Heart right ventricle (tissue), 16 donors: ENCODE measurements at regions of chr15 and their contacts with region 1.

Region 1: DNA sequence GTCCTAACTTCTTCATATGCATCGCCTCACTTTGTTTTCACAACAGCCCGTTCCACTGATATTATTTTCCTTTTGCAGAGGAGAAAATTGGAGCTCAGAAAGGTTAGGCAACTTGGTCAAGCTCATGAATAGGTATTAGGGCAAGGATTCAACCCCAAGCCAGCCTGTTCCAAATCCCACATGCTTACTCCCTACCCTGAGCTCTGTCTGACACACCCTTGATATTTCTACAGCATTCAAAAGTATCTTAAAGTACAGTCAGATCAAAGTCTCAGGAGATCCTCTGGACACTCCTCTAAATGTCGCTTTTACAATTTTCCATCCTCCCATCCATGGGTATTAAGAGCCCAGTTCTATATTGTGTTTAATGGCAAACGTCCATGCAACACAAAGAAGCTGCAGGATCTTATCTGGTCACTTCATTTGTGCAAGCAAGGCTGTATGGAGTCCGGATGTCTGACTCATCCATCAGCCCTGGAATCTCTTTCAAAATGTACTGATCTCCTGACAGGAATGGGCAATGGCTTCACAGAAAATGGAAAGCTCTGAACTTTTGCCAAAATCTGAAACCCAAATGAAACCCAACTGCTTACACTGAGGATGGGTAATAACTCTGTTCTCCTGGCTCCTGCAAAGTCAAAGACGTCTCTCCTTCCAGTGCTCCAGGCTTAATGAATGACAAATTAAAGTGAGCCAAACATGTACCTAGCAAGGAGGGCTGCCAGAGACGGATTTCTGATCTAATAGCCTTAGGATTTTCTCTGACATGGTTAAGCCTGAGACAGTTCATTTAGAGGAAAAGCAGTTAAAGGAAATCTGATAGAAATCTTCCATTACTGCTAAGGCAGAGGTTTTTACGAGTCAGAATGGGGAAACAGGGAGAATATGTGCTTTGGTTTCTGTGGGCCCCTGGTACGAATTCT is 230.9 kb upstream of the RORA start:
- DNase-seq: no peak
- ATAC-seq: peak in 1 of 8 donors; percentile 41
- H3K4me3 ChIP-seq: no peak overlapping the region
- H3K27ac ChIP-seq: no peak overlapping the region
- H3K4me1 ChIP-seq: no peaks in the 10 kb centered on the region
- H3K27me3 ChIP-seq: peaks cover 0 to 33% (median 8%) of the 10 kb centered on the region in 7 donors
- CTCF ChIP-seq: no peak

Region 2: DNA sequence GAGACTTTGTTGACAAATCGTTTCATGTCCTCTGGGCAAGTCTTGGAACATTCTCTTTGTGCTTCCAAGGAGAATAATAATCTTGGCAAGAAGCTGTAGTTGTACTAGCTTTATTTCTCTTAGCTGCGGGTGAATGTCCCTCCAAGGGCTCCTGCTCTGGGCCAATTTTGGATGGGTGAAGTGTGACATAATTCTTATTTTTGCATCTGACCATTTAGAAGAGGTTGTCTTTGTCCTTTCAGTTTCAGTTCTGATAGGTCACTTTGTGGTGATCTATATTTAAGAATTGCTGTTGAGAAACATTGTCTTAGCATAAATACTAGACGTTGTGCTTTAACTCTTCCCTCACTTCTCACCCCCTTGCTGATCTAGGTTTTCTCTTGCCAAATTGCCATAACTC is 66.1 kb before region 1 on chr15:
- intact Hi-C with region 1: loop called in 1 of 10 experiments (anchors 10 kb)
- DNase-seq: peak in 1 of 2 donors; percentile 12
- ATAC-seq: peak in 7 of 8 donors; percentile 55 to 85 (median 75)
- H3K4me3 ChIP-seq: peak overlapping the region in 4 of 10 donors; percentile 16 to 25 (median 23)
- H3K27ac ChIP-seq: peak overlapping the region in 3 of 10 donors; percentile 10 to 25 (median 24)
- H3K4me1 ChIP-seq: peaks cover 0 to 9% (median 0%) of the 10 kb centered on the region in 9 donors
- H3K27me3 ChIP-seq: no peaks in the 10 kb centered on the region
- CTCF ChIP-seq: no peak